ENCODE measurements at regions of chr1 and their contacts with region 1.

Region 1: DNA sequence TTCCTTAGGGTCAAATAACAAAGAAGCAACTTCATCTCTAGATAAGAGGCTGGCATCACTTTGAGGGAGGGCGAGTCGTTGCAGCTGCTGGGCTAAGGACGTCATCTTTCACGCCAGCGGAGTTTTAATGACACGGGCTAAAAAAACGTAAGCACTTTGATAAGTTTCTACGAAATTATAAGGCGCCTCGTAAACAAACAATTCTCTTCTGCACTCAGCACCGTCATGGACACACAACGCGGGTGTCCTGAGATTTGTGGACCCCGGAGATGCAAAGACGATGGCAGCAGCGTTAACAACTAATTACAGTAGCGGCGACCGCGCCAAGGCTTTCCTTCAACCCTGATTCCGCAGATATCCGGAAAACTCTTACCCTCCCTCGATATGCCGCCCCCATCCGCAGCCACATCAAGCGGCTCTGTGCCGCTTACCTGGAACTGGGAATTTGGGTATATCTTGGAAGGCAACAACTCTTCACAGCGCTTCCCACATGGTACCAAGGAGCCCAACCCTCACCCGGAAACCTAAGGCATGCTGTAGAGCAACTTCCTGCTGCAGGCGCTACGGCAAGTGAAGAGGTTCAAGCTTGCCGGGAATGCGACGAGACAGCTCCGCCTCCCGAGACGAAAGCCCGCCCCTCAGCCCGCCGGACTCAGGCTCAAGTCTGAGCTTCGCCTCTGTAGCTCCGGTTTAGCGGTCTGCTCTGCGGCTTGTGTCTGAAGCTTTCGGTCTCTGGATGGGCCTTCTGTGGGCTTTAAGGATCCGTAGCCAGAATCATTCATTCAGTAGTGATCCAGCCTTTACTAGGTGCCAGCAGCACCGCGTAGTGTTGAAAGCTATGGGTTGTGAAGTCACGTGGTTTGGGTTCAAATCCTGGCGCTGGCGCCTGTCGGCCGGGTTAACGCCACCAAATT is at the start of gene HEATR1:
- DNase-seq: peak; percentile 94
- H3K4me3 Mint-ChIP-seq: peak within 1 kb of the TSS; percentile 97
- H3K27ac Mint-ChIP-seq: peak within 1 kb of the TSS; percentile 91
- H3K4me1 Mint-ChIP-seq: peaks cover 21% of the 10 kb centered on the region
- H3K27me3 Mint-ChIP-seq: peaks cover 9% of the 10 kb centered on the region
- total RNA-seq, gene HEATR1: 67.5 to 70.1 TPM

Region 2: DNA sequence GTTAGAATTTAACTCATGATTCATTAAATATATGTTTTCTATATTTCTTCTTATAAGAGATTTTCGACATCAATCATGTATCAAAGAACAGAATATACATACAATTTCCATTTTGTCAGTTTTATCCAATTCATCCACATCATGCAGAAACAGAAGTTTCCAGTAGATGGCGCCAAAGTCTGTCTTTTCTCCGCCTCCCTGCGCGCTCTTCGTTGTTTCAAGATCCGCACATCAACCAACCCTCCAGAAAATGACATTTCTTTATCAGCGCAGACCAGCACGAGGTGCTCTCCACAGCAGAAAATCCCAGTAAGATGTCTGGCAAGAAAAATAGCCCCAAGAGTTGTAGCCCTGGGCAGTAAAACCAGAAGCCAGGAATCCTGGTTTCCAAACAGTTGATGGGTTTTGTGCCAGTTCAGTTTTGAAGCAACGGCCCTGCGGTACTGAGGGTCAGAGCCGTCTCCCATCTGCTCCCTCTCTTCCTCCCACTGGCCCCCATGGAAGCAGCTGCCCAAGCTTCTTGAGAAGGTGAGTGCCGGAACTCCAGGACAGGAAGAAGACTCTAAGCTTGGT is 500.5 kb before region 1 on chr1:
- CTCF ChIA-PET with region 1: interaction called, 4 read pairs
- POLR2A ChIA-PET with region 1: no interaction called
- intact Hi-C with region 1: loop called (anchors 10 kb)
- DNase-seq: peak; percentile 69
- H3K4me3 Mint-ChIP-seq: no peak overlapping the region
- H3K27ac Mint-ChIP-seq: no peak overlapping the region
- H3K4me1 Mint-ChIP-seq: peaks cover 5% of the 10 kb centered on the region
- H3K27me3 Mint-ChIP-seq: no peaks in the 10 kb centered on the region

Region 3: DNA sequence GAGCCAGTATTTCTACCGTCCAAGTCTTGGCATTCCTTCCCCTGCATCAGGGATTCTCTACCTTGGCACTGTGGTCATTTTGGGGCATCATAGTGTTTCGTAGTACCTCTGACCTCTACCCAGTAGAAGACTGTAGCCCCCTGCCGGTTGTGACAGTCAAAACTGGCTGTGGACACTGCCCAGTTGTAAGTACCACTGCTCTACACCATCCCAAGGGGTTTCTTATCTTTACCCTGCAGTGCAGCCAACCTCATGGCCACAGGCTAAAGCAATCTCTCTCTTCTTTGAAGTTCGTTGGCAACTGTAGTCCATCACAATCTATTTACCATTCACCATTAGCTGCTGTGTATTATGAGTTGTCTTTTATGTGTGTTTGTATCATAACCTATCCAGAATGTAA is 293.2 kb before region 1 on chr1:
- CTCF ChIA-PET with region 1: no interaction called
- POLR2A ChIA-PET with region 1: no interaction called
- intact Hi-C with region 1: no loop called
- DNase-seq: no peak
- H3K4me3 Mint-ChIP-seq: no peak overlapping the region
- H3K27ac Mint-ChIP-seq: no peak overlapping the region
- H3K4me1 Mint-ChIP-seq: no peaks in the 10 kb centered on the region
- H3K27me3 Mint-ChIP-seq: peaks cover 3% of the 10 kb centered on the region

Region 4: GRCh38 chr1:236523701-236524141 is 80.5 kb before region 1 on chr1 and contains the start of gene LGALS8:
- CTCF ChIA-PET with region 1: no interaction called
- POLR2A ChIA-PET with region 1: no interaction called
- intact Hi-C with region 1: loop called (anchors 1 kb)
- DNase-seq: peak; percentile 94
- H3K4me3 Mint-ChIP-seq: peak within 1 kb of the TSS; percentile 97
- H3K27ac Mint-ChIP-seq: peak within 1 kb of the TSS; percentile 98
- H3K4me1 Mint-ChIP-seq: peaks cover 23% of the 10 kb centered on the region
- H3K27me3 Mint-ChIP-seq: no peaks in the 10 kb centered on the region
- total RNA-seq, gene LGALS8: 83.7 to 88.3 TPM

Region 5: GRCh38 chr1:236534151-236534651 is 70.0 kb before region 1 on chr1:
- CTCF ChIA-PET with region 1: no interaction called
- POLR2A ChIA-PET with region 1: no interaction called
- intact Hi-C with region 1: loop called (anchors 1 kb)
- DNase-seq: peak; percentile 71
- H3K4me3 Mint-ChIP-seq: peak overlapping the region; percentile 34
- H3K27ac Mint-ChIP-seq: peak overlapping the region; percentile 88
- H3K4me1 Mint-ChIP-seq: peaks cover 54% of the 10 kb centered on the region
- H3K27me3 Mint-ChIP-seq: no peaks in the 10 kb centered on the region

Region 6: GRCh38 chr1:236795035-236795756 is 190.9 kb after region 1 on chr1 and contains the start of gene MTR:
- CTCF ChIA-PET with region 1: no interaction called
- POLR2A ChIA-PET with region 1: interaction called, 16 read pairs
- intact Hi-C with region 1: loop called (anchors 1 kb)
- DNase-seq: peak; percentile 98
- H3K4me3 Mint-ChIP-seq: peak within 1 kb of the TSS; percentile 91
- H3K27ac Mint-ChIP-seq: peak within 1 kb of the TSS; percentile 96
- H3K4me1 Mint-ChIP-seq: peaks cover 31% of the 10 kb centered on the region
- H3K27me3 Mint-ChIP-seq: no peaks in the 10 kb centered on the region
- total RNA-seq, gene MTR: 46.3 to 46.6 TPM

Region 7: GRCh38 chr1:236868625-236869467 is 264.6 kb after region 1 on chr1:
- CTCF ChIA-PET with region 1: interaction called, 7 read pairs
- POLR2A ChIA-PET with region 1: no interaction called
- intact Hi-C with region 1: loop called (anchors 5 kb)
- DNase-seq: peak; percentile 57
- H3K4me3 Mint-ChIP-seq: no peak overlapping the region
- H3K27ac Mint-ChIP-seq: no peak overlapping the region
- H3K4me1 Mint-ChIP-seq: no peaks in the 10 kb centered on the region
- H3K27me3 Mint-ChIP-seq: no peaks in the 10 kb centered on the region

Region 8: DNA sequence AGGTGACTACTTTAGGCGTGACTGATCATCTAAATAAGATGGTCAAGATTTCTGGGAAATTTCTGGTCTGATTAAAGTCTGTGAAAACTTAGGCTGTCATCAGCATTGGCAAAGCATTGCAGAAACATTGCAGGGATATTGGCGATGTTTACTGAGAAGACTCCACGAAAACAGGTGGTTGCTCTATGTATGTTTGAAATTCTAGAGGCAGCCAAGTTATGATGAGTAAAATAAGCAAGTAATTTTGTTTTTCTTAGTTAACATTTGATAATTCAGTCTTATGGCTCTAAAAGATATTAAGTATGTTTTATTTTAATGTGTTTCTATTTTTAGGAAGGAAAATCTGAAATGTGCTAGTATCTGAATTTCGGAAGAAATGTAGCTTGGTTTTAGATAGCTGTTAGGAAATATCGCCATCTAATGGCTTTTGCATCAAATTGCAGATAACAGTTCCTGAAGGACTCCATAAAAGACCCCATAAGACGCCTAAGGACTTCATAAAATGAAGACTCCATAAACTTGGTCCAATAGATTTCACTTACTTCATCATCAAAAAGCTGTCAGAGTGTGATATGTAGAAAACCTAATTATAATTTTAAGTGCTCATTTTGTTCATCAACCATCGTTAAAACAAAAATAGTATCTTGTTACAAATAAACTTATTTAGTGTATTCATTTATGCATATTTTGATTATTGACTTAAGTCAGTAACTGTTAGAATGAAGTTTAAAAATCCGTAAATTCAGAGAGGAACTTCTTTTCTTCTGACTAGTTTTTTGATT is 782.3 kb after region 1 on chr1:
- CTCF ChIA-PET with region 1: interaction called, 3 read pairs
- POLR2A ChIA-PET with region 1: no interaction called
- intact Hi-C with region 1: loop called (anchors 5 kb)
- DNase-seq: no peak
- H3K4me3 Mint-ChIP-seq: no peak overlapping the region
- H3K27ac Mint-ChIP-seq: no peak overlapping the region
- H3K4me1 Mint-ChIP-seq: no peaks in the 10 kb centered on the region
- H3K27me3 Mint-ChIP-seq: peaks cover 4% of the 10 kb centered on the region